ENCODE measurements at regions of chr9 and their contacts with region 1.

Region 1: DNA sequence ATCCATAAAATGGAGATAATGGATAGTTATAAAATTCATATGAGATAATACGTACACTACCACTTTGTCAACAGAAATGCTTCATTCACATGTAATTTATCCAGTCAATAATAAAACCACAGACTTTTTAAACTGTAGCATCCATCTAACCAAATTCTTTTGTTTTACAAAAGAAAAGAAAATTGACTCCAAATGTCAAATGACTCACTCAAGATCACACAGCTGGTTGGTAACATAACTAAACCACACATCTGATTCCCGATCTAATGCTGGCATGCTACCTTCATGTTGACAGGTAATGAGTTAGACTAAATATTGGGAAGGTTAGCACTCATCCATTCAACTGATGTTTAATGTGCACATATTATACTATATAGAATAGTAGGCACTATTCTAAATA is 4.9 kb downstream of the FRMD3 start:
- DNase-seq: no peak
- ATAC-seq: no peak
- H3K4me3 ChIP-seq: no peak overlapping the region
- H3K27ac ChIP-seq: no peak overlapping the region
- H3K4me1 ChIP-seq: peaks cover 13% of the 10 kb centered on the region
- H3K27me3 ChIP-seq: no peaks in the 10 kb centered on the region
- CTCF ChIP-seq: no peak
- POLR2A ChIP-seq: no peak

Region 2: DNA sequence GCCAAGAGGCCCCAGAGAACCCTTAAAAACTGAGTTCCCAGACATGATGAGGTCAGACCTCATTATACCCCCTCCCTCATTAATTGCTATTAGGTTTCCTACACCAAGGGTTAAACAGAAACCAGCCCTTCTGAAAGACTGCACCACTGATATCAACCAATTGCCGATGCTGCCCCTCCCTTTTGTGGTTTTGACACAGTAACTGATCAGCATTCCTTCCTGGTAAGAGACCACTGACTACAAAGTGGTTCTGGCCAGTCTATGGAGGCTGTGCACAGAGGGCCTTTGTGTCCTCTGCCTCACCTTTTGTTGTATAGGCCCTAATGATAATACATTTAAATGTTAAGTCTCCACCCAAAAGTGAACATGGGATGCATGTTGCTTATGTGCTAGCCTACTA is 196.6 kb before region 1 on chr9:
- intact Hi-C with region 1: loop called (anchors 5 kb)
- DNase-seq: no peak
- ATAC-seq: no peak
- H3K4me3 ChIP-seq: no peak overlapping the region
- H3K27ac ChIP-seq: no peak overlapping the region
- H3K4me1 ChIP-seq: no peaks in the 10 kb centered on the region
- H3K27me3 ChIP-seq: no peaks in the 10 kb centered on the region
- CTCF ChIP-seq: no peak
- POLR2A ChIP-seq: no peak